ENCODE measurements at regions of chr10 and their contacts with region 1.

Region 1: DNA sequence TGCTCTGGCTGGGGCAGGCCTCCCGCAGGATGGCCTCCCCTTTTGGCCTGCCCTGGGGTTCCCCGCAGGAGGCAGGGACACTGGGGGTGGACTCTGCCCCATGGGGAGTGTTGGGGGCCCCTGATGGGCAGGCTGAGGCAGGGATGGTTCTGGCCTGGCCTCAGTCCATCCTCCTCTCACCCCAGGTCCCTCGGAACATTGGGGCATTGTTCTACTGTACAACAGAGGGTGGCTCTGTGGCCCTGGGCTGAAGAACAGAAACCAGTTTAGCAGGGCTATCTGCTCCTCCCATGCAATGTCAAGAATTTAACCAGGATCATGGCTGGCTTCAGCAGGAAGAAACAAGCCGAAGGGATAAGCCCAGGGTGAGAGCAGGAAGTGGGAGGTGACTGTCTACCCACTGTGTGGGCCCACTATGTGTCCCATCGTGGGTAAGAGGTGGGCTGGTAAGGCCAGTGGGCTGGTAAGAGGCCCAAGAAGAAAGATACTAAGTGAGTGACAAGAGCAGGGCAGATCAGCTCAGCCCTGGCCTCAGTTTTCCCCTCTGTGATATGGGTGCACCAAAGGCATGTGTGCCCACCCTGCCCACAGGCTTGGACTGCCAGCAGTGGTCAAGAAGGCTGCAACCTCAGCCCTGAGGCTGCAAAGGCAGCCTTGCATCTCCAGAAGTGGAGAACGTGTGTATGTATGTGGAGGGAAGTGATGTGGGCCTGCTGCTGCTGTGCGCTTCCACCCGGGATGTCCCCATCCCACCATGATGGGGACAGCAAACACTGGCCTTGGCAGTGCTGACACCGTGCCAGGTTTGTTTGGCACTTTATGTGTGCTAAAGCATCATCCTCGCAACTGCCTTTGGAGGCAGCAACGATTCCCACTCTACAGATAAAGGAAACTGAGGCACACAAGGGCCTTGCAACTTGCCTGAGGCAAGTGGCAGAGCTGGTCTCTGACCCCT is 138.9 kb downstream of the SH3PXD2A start:
- DNase-seq: peak; percentile 72 to 92
- H3K4me3 ChIP-seq: peak overlapping the region in 1 of 3 donors; percentile 17
- H3K27ac ChIP-seq: peak overlapping the region; percentile 93 to 95
- H3K4me1 ChIP-seq: peaks cover 5 to 23% of the 10 kb centered on the region in 2 donors
- H3K27me3 ChIP-seq: no peaks in the 10 kb centered on the region
- CTCF ChIP-seq: no peak
- POLR2A ChIP-seq: no peak

Region 2: DNA sequence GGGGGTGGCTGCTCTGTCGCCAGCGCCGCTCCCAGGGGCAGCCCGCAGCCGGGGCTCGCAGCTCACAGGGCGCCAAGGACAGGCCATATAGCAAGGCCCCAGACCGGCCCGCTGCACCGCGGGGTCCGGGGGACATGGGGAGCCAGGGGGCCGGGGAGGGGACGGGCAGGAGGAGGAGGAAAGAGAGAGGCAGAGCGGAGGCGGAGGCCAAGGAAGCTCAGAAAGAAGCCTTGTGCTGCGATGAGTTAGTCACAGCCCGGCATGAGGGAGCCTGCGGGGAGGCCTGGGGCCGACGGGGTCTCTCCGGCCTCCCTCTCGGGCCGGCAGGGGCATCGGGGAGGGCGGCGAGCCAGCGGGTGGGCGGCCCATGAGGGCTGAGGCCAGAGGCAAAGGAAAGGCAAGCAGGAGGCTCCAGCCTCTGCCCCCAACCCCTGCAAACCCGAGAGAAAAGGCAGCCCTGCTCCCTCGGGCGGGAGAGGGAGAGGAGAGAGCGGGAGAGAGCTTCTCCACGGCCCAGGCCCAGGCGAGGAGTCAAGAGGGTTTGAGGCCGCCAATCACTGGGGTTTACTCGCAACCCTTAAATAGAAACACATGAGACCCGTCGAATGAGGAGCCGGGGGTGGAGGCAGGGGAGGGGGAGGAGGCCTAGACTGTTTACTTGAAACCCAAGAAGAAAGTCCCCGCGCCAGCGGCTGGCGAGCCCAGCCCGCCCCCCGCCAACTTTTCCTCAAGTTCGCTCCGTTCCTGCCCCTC is 55.1 kb before region 1 on chr10:
- intact Hi-C with region 1: no loop called
- DNase-seq: peak; percentile 73 to 89
- H3K4me3 ChIP-seq: peak overlapping the region; percentile 61 to 89 (median 65)
- H3K27ac ChIP-seq: peak overlapping the region; percentile 94 to 97
- H3K4me1 ChIP-seq: peaks cover 8 to 16% of the 10 kb centered on the region in 2 donors
- H3K27me3 ChIP-seq: no peaks in the 10 kb centered on the region
- CTCF ChIP-seq: no peak
- POLR2A ChIP-seq: peak; percentile 64

Region 3: DNA sequence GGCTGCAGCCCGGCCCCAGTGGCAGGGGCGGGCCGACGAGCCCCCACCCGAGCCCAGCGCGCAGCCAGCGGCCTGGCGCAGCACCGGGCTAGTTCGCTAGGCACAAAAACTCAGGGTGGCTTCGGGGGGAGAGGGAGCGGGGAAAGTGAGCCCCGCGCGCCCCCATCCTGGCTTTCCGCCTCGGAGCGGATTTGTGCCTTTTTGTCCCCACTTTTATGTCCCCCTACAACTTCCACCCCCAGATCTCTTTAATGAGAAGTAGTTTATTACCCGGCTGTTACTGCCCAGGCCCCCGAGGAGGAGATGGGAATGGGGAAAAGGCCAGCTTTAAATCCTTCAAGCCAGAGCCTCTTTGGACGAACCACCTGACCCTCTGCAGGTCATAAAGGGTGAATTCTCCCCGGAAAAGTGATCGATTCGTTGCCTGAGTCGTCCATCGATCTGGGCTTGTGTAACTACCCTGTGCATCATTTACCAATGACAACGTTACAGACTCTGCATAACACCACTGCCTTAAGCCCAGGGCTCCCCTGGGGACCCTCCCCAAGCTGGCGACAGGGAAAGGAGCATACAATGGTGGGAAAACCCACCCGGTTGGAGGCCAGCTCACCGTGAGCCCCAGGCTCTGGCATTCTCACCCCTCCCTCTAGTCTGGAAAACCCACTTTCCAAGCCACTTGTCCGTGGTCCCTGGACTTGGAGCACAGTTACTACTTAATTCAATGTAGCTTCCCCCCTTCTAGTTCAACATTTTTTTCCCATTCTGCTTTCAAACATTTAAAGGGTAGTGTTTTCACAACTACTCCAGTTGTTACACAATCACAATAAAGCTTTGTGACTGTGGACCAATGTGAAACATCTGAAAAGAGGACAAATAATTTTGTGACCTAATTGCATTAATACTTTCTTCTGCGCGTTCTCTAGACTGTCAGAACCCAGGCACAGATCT is 139.6 kb after region 1 on chr10:
- intact Hi-C with region 1: loop called (anchors 2 kb)
- DNase-seq: no peak
- H3K4me3 ChIP-seq: peak overlapping the region; percentile 60 to 79 (median 73)
- H3K27ac ChIP-seq: peak overlapping the region; percentile 77 to 84
- H3K4me1 ChIP-seq: peaks cover 4 to 17% of the 10 kb centered on the region in 2 donors
- H3K27me3 ChIP-seq: no peaks in the 10 kb centered on the region
- CTCF ChIP-seq: no peak
- POLR2A ChIP-seq: no peak

Measured in breast epithelium (tissue), 4 donors.